Calu3 (cell line): ENCODE measurements at regions of chr2 and their contacts with region 1.

Region 1: GRCh38 chr2:240341064-240341463 is 94.4 kb upstream of the GPC1 start:
- DNase-seq: no peak
- H3K4me3 Mint-ChIP-seq: no peak overlapping the region
- H3K27ac Mint-ChIP-seq: no peak overlapping the region
- H3K4me1 Mint-ChIP-seq: no peaks in the 10 kb centered on the region
- H3K27me3 Mint-ChIP-seq: peaks cover 37% of the 10 kb centered on the region
- CTCF ChIP-seq: no peak

Region 2: GRCh38 chr2:240232961-240233893 is 107.8 kb before region 1 on chr2:
- CTCF ChIA-PET with region 1: interaction called, 22 read pairs
- intact Hi-C with region 1: no loop called
- DNase-seq: peak; percentile 93
- H3K4me3 Mint-ChIP-seq: peak overlapping the region; percentile 57
- H3K27ac Mint-ChIP-seq: no peak overlapping the region
- H3K4me1 Mint-ChIP-seq: peaks cover 30% of the 10 kb centered on the region
- H3K27me3 Mint-ChIP-seq: peaks cover 8% of the 10 kb centered on the region
- CTCF ChIP-seq: peak; percentile 93

Region 3: GRCh38 chr2:240325016-240325944 is 15.8 kb before region 1 on chr2:
- CTCF ChIA-PET with region 1: no interaction called
- intact Hi-C with region 1: no loop called
- DNase-seq: peak; percentile 61
- H3K4me3 Mint-ChIP-seq: no peak overlapping the region
- H3K27ac Mint-ChIP-seq: no peak overlapping the region
- H3K4me1 Mint-ChIP-seq: peaks cover 10% of the 10 kb centered on the region
- H3K27me3 Mint-ChIP-seq: peaks cover 69% of the 10 kb centered on the region
- CTCF ChIP-seq: no peak